ENCODE measurements at regions of chr6 and their contacts with region 1.

Region 1: DNA sequence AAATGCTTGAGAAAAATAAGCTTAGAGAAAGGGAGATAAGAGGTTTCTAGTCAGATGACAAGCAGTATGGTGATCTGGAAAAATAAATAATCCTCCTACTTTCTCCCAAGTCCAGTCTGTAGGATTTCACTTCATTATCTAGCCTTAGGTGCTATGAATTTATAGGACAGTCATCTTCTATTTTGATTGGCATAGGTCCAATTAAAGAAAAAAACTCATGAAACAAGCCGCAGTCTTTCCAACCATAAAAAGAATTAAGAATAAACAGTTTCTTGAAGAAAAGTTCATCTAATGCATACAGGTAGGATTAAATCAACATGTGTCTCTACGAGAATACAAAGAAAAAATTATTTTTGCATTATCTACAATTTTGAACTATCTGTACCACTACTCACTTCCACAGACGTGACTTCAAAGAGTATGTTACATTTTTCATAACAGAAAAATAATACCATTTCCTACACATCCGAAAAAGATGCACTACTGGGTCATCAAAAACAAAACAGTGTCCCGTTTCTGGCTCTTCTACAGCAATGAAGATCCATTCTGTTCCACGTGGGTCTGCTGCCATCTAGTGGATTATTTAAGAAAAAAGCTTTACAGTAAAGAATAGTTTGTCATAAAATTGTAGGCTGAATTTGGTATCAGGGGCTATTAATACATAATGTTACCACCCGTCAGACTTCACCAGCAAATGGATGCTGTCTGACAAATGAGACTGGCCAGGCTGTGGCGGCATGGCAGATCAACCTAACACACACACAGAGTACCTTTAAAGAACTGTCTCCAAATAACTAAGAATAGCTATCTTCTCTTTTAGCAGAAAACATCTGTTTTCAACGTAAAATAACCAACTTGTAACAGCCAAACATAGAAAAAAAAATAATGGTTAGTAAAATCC is 28.9 kb downstream of the STX7 start:
- DNase-seq: no peak
- ATAC-seq: peak; percentile 74
- H3K4me3 Mint-ChIP-seq: peak overlapping the region; percentile 61
- H3K27ac Mint-ChIP-seq: peak overlapping the region; percentile 82
- H3K4me1 Mint-ChIP-seq: peaks cover 85% of the 10 kb centered on the region
- H3K27me3 Mint-ChIP-seq: no peaks in the 10 kb centered on the region
- CTCF ChIP-seq: peak; percentile 84

Region 2: DNA sequence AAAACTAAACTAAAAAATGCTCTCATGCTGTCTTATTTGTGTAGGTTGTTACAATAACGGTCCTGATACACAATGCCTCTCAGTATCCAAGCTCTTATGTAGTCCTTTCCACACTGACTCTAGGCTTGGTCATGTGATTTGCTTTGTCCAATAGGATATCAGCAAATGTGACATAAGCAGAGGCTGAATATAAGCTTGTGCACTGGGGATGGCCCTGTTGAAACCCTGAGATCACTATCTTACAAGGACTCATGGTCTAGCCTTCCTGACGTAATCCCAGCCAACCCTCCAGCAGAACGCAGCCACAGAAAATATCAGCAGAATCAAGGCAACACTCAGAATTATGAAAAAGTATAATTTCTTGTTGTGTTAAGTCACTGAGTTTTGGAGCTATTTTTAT is 387.8 kb before region 1 on chr6:
- CTCF ChIA-PET with region 1: no interaction called
- POLR2A ChIA-PET with region 1: no interaction called
- intact Hi-C with region 1: no loop called
- DNase-seq: no peak
- ATAC-seq: no peak
- H3K4me3 Mint-ChIP-seq: no peak overlapping the region
- H3K27ac Mint-ChIP-seq: no peak overlapping the region
- H3K4me1 Mint-ChIP-seq: no peaks in the 10 kb centered on the region
- H3K27me3 Mint-ChIP-seq: no peaks in the 10 kb centered on the region
- CTCF ChIP-seq: no peak

Region 3: GRCh38 chr6:132300323-132300949 is 183.6 kb before region 1 on chr6:
- CTCF ChIA-PET with region 1: interaction called, 121 read pairs
- POLR2A ChIA-PET with region 1: interaction called, 4 read pairs
- intact Hi-C with region 1: loop called (anchors 1 kb)
- DNase-seq: no peak
- ATAC-seq: peak; percentile 98
- H3K4me3 Mint-ChIP-seq: no peak overlapping the region
- H3K27ac Mint-ChIP-seq: no peak overlapping the region
- H3K4me1 Mint-ChIP-seq: no peaks in the 10 kb centered on the region
- H3K27me3 Mint-ChIP-seq: no peaks in the 10 kb centered on the region
- CTCF ChIP-seq: peak; percentile 67

Region 4: GRCh38 chr6:132365281-132365907 is 118.6 kb before region 1 on chr6:
- CTCF ChIA-PET with region 1: interaction called, 9 read pairs
- POLR2A ChIA-PET with region 1: no interaction called
- intact Hi-C with region 1: loop called (anchors 1 kb)
- DNase-seq: no peak
- ATAC-seq: peak; percentile 83
- H3K4me3 Mint-ChIP-seq: peak overlapping the region; percentile 44
- H3K27ac Mint-ChIP-seq: peak overlapping the region; percentile 82
- H3K4me1 Mint-ChIP-seq: peaks cover 61% of the 10 kb centered on the region
- H3K27me3 Mint-ChIP-seq: no peaks in the 10 kb centered on the region
- CTCF ChIP-seq: no peak

Region 5: DNA sequence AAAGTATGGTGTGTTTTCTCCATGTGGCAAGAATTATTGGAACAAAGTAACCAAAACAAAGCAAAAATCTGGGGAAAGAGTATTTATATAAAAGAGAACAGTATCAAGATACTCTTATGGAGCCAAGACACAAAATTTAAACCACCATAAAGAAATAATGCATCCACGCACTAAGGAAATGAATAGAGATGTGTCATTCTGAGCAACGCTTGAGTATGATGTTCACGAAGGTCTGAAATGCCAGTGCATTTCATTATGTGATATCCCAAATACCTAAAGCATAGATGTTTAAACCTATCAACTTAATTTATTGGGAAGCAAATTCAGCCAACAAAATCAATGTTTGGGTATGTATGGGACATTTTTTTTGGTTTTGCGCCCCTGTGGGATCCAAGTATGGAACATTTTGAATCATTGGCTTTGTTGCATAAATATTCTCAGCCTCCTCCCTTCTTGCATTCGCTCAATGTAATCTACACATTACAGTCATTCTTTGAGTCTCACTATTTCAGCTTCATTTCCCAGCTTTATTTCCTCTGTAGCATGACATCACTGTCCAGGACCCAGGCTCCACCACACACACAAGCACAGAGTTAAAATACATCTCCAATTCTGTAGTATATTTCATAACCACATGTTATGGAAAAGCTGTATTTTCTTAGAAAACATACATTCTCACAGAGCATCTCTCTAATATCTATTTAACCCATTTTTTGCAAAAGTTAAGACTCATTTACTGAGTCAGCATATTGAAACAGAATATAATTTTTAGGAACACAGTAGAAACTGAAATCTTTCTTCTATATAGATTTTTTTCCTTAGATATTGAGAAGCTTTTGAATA is 71.2 kb before region 1 on chr6:
- CTCF ChIA-PET with region 1: no interaction called
- POLR2A ChIA-PET with region 1: no interaction called
- intact Hi-C with region 1: no loop called
- DNase-seq: no peak
- ATAC-seq: no peak
- H3K4me3 Mint-ChIP-seq: no peak overlapping the region
- H3K27ac Mint-ChIP-seq: no peak overlapping the region
- H3K4me1 Mint-ChIP-seq: peaks cover 7% of the 10 kb centered on the region
- H3K27me3 Mint-ChIP-seq: peaks cover 11% of the 10 kb centered on the region
- CTCF ChIP-seq: no peak

Region 6: DNA sequence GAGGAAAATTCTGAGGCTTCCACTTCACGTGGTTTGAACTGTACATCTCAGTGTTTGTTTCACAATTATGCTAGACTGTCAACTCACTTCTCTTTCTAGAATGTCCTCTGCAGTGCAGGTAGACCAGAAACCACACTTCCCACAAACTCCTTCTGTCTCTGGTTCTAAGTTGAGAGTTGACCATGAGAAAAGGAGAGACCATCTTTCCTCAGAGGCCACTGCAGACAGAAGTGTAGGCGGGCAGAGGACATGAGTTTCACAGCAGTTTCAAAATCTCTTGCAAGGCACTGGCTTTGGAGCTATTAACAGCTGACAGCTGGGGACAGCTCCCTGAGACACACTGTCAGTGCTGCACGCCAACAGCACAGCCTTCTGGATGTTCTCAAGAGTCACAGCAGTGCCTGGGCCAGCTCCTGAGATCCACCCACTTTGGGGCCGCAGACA is 27.3 kb before region 1 on chr6:
- CTCF ChIA-PET with region 1: interaction called, 5 read pairs
- POLR2A ChIA-PET with region 1: no interaction called
- intact Hi-C with region 1: loop called (anchors 2 kb)
- DNase-seq: no peak
- ATAC-seq: peak; percentile 28
- H3K4me3 Mint-ChIP-seq: no peak overlapping the region
- H3K27ac Mint-ChIP-seq: peak overlapping the region; percentile 62
- H3K4me1 Mint-ChIP-seq: peaks cover 28% of the 10 kb centered on the region
- H3K27me3 Mint-ChIP-seq: no peaks in the 10 kb centered on the region
- CTCF ChIP-seq: no peak

Region 7: GRCh38 chr6:132471788-132472187 is 12.2 kb before region 1 on chr6:
- CTCF ChIA-PET with region 1: interaction called, 7 read pairs
- POLR2A ChIA-PET with region 1: no interaction called
- intact Hi-C with region 1: loop called (anchors 1 kb)
- DNase-seq: no peak
- ATAC-seq: no peak
- H3K4me3 Mint-ChIP-seq: no peak overlapping the region
- H3K27ac Mint-ChIP-seq: no peak overlapping the region
- H3K4me1 Mint-ChIP-seq: peaks cover 11% of the 10 kb centered on the region
- H3K27me3 Mint-ChIP-seq: no peaks in the 10 kb centered on the region
- CTCF ChIP-seq: no peak

Region 8: GRCh38 chr6:132512638-132513632 is 28.9 kb after region 1 on chr6 and contains the start of gene STX7:
- CTCF ChIA-PET with region 1: interaction called, 21 read pairs
- POLR2A ChIA-PET with region 1: interaction called, 79 read pairs
- intact Hi-C with region 1: no loop called
- DNase-seq: peak; percentile 89
- ATAC-seq: peak; percentile 82
- H3K4me3 Mint-ChIP-seq: peak within 1 kb of the TSS; percentile 96
- H3K27ac Mint-ChIP-seq: peak within 1 kb of the TSS; percentile 97
- H3K4me1 Mint-ChIP-seq: peaks cover 68% of the 10 kb centered on the region
- H3K27me3 Mint-ChIP-seq: no peaks in the 10 kb centered on the region
- CTCF ChIP-seq: no peak
- total RNA-seq, gene STX7: 109 and 138 TPM in 2 replicates

Region 9: GRCh38 chr6:132537977-132538376 is 53.9 kb after region 1 on chr6 and contains the start of gene TAAR9:
- CTCF ChIA-PET with region 1: no interaction called
- POLR2A ChIA-PET with region 1: no interaction called
- intact Hi-C with region 1: no loop called
- DNase-seq: no peak
- ATAC-seq: no peak
- H3K4me3 Mint-ChIP-seq: no peak within 1 kb of the TSS
- H3K27ac Mint-ChIP-seq: no peak within 1 kb of the TSS
- H3K4me1 Mint-ChIP-seq: no peaks in the 10 kb centered on the region
- H3K27me3 Mint-ChIP-seq: peaks cover 18% of the 10 kb centered on the region
- CTCF ChIP-seq: no peak
- total RNA-seq, gene TAAR9: not detected in 2 replicates

Region 10: DNA sequence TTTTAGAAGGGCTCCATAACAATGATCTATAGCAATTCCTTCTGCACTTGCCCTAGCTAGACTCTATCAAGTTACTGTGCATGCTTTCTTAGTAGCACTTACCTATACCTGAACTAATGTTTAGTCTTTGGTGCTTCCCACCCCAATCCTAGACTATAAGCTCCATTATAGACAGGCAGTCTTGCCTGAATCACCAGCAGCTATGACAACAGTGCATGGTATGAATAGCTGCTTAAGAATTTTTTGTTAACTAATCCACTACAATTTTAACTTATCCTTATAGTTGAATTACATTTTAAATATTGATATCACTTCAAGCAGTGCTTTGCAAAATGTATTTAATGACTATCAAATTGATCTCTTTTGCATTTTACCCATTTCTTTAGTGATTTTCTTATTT is 494.7 kb after region 1 on chr6:
- CTCF ChIA-PET with region 1: no interaction called
- POLR2A ChIA-PET with region 1: no interaction called
- intact Hi-C with region 1: no loop called
- DNase-seq: no peak
- ATAC-seq: no peak
- H3K4me3 Mint-ChIP-seq: no peak overlapping the region
- H3K27ac Mint-ChIP-seq: no peak overlapping the region
- H3K4me1 Mint-ChIP-seq: no peaks in the 10 kb centered on the region
- H3K27me3 Mint-ChIP-seq: peaks cover 11% of the 10 kb centered on the region
- CTCF ChIP-seq: no peak